CD4-positive, alpha-beta T cell (primary cell): ENCODE measurements at regions of chr6 and their contacts with region 1.

Region 1: GRCh38 chr6:28895134-28895812 is 28.5 kb downstream of the TRIM27 start:
- DNase-seq: peak; percentile 81 to 97 (median 88)
- ATAC-seq: peak; percentile 70
- H3K4me3 ChIP-seq: peak overlapping the region; percentile 78
- H3K4me3 Mint-ChIP-seq: peak overlapping the region; percentile 100
- H3K27ac ChIP-seq: peak overlapping the region; percentile 95 to 96
- H3K27ac Mint-ChIP-seq: peak overlapping the region; percentile 100
- H3K4me1 ChIP-seq: peaks cover 12% of the 10 kb centered on the region
- H3K4me1 Mint-ChIP-seq: peaks cover 27% of the 10 kb centered on the region
- H3K27me3 ChIP-seq: no peaks in the 10 kb centered on the region
- H3K27me3 Mint-ChIP-seq: peaks cover 14% of the 10 kb centered on the region
- CTCF ChIP-seq: no peak

Region 2: DNA sequence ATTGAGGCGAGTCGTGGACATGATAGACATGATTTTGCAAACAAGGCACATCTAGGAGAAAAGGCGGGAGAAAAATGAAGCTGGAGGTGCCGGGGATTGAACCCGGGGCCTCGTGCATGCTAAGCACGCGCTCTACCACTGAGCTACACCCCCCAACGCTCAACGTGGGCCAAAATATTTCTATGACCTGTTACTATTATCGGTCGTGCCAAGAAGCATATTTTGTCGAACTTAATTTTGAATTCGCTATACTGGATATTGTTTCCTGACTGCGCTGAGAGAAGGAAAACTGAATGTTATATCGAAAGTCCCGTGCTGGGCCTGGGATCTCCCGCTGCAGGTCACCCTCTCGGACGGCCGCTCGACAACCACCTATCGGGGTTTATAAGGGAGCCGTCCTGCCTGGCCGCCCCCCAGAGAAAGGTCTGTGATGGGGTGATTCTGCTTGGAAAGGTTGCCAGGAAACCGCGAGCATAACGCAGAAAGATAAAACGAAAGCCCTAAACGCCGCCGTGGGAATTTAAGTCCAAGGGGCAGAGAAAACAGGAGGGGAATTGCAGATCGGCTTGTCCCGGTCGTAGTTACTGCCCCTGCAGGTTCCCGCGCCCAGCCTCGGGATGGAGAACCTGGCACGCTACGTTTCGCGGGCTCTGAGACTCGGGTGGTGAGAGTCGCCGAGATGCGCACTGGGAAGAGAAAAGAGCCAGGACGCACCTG is 31.5 kb before region 1 on chr6:
- CTCF ChIA-PET with region 1: interaction called, 8 read pairs
- POLR2A ChIA-PET with region 1: interaction called, 155 read pairs
- intact Hi-C with region 1: loop called (anchors 1 kb)
- DNase-seq: peak; percentile 69 to 93 (median 80)
- ATAC-seq: peak; percentile 39
- H3K4me3 ChIP-seq: peak overlapping the region; percentile 82
- H3K4me3 Mint-ChIP-seq: peak overlapping the region; percentile 88
- H3K27ac ChIP-seq: peak overlapping the region; percentile 30 to 47
- H3K27ac Mint-ChIP-seq: peak overlapping the region; percentile 93
- H3K4me1 ChIP-seq: peaks cover 34% of the 10 kb centered on the region
- H3K4me1 Mint-ChIP-seq: peaks cover 51% of the 10 kb centered on the region
- H3K27me3 ChIP-seq: no peaks in the 10 kb centered on the region
- H3K27me3 Mint-ChIP-seq: peaks cover 7% of the 10 kb centered on the region
- CTCF ChIP-seq: peak; percentile 10

Region 3: DNA sequence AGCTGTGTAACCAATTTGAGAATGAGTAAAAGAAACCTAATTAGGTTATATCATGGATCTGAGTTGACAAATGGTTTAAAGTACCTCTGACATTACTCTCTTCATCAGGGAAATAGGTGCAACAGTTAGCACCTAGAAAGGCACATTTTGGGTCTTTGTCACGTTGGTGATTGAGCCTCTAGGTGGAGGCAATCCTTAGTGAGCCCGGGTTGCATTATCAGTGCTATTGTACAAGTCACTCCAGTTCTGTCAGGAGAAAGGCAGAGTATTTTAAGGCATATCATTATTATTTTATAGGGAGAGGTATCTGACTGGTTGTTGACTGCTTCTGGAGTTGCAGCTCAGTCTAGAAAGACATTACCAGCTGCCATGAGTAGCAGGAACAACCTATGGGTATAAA is 26.4 kb before region 1 on chr6:
- CTCF ChIA-PET with region 1: interaction called, 8 read pairs
- POLR2A ChIA-PET with region 1: interaction called, 155 read pairs
- intact Hi-C with region 1: loop called in 1 of 2 experiments (anchors 2 kb)
- DNase-seq: no peak
- ATAC-seq: no peak
- H3K4me3 ChIP-seq: no peak overlapping the region
- H3K4me3 Mint-ChIP-seq: peak overlapping the region; percentile 3
- H3K27ac ChIP-seq: no peak overlapping the region
- H3K27ac Mint-ChIP-seq: peak overlapping the region; percentile 93
- H3K4me1 ChIP-seq: peaks cover 22% of the 10 kb centered on the region
- H3K4me1 Mint-ChIP-seq: peaks cover 38% of the 10 kb centered on the region
- H3K27me3 ChIP-seq: no peaks in the 10 kb centered on the region
- H3K27me3 Mint-ChIP-seq: no peaks in the 10 kb centered on the region
- CTCF ChIP-seq: no peak

Region 4: DNA sequence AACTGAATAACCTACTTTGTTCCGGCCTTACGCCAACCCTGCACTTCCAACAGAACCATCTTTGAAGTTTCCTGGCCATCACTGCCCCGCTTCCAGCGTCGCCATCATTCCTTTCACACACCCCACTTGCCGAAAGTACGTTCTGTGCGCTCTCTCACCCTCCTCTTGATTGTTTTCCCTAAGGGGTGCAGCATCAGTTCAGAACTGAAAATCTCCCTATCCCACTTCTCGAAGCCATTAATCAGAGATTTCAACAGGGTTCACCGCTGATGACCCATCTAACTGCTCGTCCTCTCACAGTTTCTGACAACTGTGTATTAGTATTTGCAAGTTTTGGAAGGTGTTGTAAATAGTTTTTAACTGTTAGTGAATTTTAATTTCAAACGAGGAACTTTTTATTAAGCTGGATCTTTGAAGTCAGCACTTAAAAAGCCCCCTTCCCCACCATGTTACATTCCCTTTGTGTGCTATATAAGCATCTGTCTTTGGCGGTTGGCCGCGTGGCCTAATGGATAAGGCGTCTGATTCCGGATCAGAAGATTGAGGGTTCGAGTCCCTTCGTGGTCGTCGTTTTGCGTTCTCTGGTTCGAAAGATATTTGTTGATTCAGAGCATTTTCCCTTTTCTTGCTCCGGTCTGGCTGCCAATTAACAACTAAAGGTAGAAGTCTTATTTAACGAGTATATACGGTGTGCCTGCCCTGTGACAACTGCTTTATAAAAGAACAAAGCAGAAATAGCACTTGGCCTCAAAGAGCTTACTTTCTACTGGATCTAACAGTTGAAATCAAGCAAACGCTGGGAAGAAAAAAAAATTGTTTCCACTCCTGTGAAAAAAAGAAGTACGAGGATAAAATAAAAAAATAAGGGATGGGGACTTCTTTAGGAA is 14.1 kb before region 1 on chr6:
- CTCF ChIA-PET with region 1: interaction called, 6 read pairs
- POLR2A ChIA-PET with region 1: interaction called, 146 read pairs
- intact Hi-C with region 1: loop called (anchors 1 kb)
- DNase-seq: peak in 13 of 14 experiments; percentile 27 to 71 (median 43)
- ATAC-seq: no peak
- H3K4me3 ChIP-seq: peak overlapping the region; percentile 39
- H3K4me3 Mint-ChIP-seq: peak overlapping the region; percentile 77
- H3K27ac ChIP-seq: no peak overlapping the region
- H3K27ac Mint-ChIP-seq: peak overlapping the region; percentile 81
- H3K4me1 ChIP-seq: peaks cover 24% of the 10 kb centered on the region
- H3K4me1 Mint-ChIP-seq: peaks cover 39% of the 10 kb centered on the region
- H3K27me3 ChIP-seq: no peaks in the 10 kb centered on the region
- H3K27me3 Mint-ChIP-seq: peaks cover 7% of the 10 kb centered on the region
- CTCF ChIP-seq: no peak

Region 5: DNA sequence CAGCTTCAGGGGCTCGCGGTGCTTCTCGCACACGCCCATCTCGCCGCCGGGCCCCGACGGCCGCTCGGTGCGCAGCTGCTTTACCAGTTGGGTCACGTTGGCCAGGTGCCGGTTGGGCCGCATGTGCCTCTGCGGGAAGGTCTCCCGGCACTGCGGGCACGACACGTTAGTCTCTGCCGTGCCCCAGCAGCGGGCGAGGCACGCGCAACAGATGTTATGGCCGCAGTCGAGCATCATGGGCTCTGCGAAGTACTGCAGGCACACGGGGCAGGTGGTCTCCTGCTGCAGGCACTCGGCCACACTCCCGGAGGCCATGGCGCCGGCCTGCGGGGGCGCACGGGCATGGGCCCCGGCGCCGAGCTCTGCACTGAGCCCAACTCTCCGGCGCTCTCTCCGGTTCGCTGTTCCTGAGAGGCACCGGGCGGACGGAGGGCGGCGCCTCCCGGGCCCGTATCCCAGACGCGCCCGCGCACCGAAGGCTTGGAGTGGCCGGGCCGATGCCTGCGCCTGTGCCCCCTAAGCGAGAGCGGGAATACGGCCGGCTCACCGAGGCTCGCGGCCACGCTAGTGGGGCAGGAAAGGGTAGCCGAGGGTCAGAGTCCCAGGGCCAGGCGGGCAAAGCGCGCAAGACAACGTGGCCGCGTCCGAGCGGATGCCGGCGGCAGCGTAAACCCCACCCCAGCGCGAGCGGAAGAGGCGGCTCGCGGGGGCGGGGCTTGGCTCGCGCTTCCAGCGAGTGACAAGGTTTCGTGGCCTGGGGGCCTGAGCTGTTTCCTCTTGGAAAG is 28.2 kb after region 1 on chr6 and contains the start of gene TRIM27:
- CTCF ChIA-PET with region 1: interaction called, 6 read pairs
- POLR2A ChIA-PET with region 1: interaction called, 78 read pairs
- intact Hi-C with region 1: loop called (anchors 2 kb)
- DNase-seq: peak; percentile 58 to 90 (median 74)
- ATAC-seq: peak; percentile 78
- H3K4me3 ChIP-seq: peak within 1 kb of the TSS; percentile 98
- H3K4me3 Mint-ChIP-seq: peak within 1 kb of the TSS; percentile 95
- H3K27ac ChIP-seq: peak within 1 kb of the TSS; percentile 67 to 80
- H3K27ac Mint-ChIP-seq: peak within 1 kb of the TSS; percentile 89
- H3K4me1 ChIP-seq: peaks cover 44% of the 10 kb centered on the region
- H3K4me1 Mint-ChIP-seq: peaks cover 42% of the 10 kb centered on the region
- H3K27me3 ChIP-seq: no peaks in the 10 kb centered on the region
- H3K27me3 Mint-ChIP-seq: no peaks in the 10 kb centered on the region
- CTCF ChIP-seq: no peak
- total RNA-seq, gene TRIM27: 11.5 to 13.2 TPM

Region 6: GRCh38 chr6:28981833-28982475 is 86.7 kb after region 1 on chr6:
- CTCF ChIA-PET with region 1: interaction called, 3 read pairs
- POLR2A ChIA-PET with region 1: interaction called, 16 read pairs
- intact Hi-C with region 1: loop called in 1 of 2 experiments (anchors 5 kb)
- DNase-seq: peak; percentile 46 to 91 (median 64)
- ATAC-seq: peak; percentile 62
- H3K4me3 ChIP-seq: peak overlapping the region; percentile 88
- H3K4me3 Mint-ChIP-seq: peak overlapping the region; percentile 95
- H3K27ac ChIP-seq: no peak overlapping the region
- H3K27ac Mint-ChIP-seq: peak overlapping the region; percentile 98
- H3K4me1 ChIP-seq: peaks cover 28% of the 10 kb centered on the region
- H3K4me1 Mint-ChIP-seq: peaks cover 82% of the 10 kb centered on the region
- H3K27me3 ChIP-seq: peaks cover 0 to 15% of the 10 kb centered on the region in 2 experiments
- H3K27me3 Mint-ChIP-seq: peaks cover 64% of the 10 kb centered on the region
- CTCF ChIP-seq: no peak

Region 7: GRCh38 chr6:29016559-29017427 is 121.5 kb after region 1 on chr6:
- CTCF ChIA-PET with region 1: no interaction called
- POLR2A ChIA-PET with region 1: interaction called, 11 read pairs
- intact Hi-C with region 1: no loop called
- DNase-seq: peak; percentile 71 to 91 (median 80)
- ATAC-seq: peak; percentile 66
- H3K4me3 ChIP-seq: peak overlapping the region; percentile 55
- H3K4me3 Mint-ChIP-seq: peak overlapping the region; percentile 87
- H3K27ac ChIP-seq: no peak overlapping the region
- H3K27ac Mint-ChIP-seq: peak overlapping the region; percentile 50
- H3K4me1 ChIP-seq: peaks cover 21% of the 10 kb centered on the region
- H3K4me1 Mint-ChIP-seq: peaks cover 16% of the 10 kb centered on the region
- H3K27me3 ChIP-seq: peaks cover 13 to 24% of the 10 kb centered on the region in 2 experiments
- H3K27me3 Mint-ChIP-seq: peaks cover 42% of the 10 kb centered on the region
- CTCF ChIP-seq: peak; percentile 95